CD4-positive, alpha-beta T cell (primary cell): ENCODE measurements at regions of chr12 and their contacts with region 1.

Region 1: GRCh38 chr12:56636675-56637540 is 6.8 kb upstream of the BAZ2A start:
- DNase-seq: peak; percentile 87 to 98 (median 93)
- ATAC-seq: peak; percentile 72
- H3K4me3 ChIP-seq: peak overlapping the region; percentile 76
- H3K4me3 Mint-ChIP-seq: peak overlapping the region; percentile 94
- H3K27ac ChIP-seq: peak overlapping the region; percentile 56 to 84
- H3K27ac Mint-ChIP-seq: peak overlapping the region; percentile 98
- H3K4me1 ChIP-seq: peaks cover 56% of the 10 kb centered on the region
- H3K4me1 Mint-ChIP-seq: peaks cover 65% of the 10 kb centered on the region
- H3K27me3 ChIP-seq: no peaks in the 10 kb centered on the region
- H3K27me3 Mint-ChIP-seq: no peaks in the 10 kb centered on the region
- CTCF ChIP-seq: peak; percentile 72

Region 2: GRCh38 chr12:55926738-55927587 is 709.9 kb before region 1 on chr12:
- CTCF ChIA-PET with region 1: no interaction called
- POLR2A ChIA-PET with region 1: interaction called, 3 read pairs
- intact Hi-C with region 1: loop called in 1 of 2 experiments (anchors 2 kb)
- DNase-seq: peak; percentile 83 to 96 (median 88)
- ATAC-seq: peak; percentile 32
- H3K4me3 ChIP-seq: peak overlapping the region; percentile 98
- H3K4me3 Mint-ChIP-seq: peak overlapping the region; percentile 96
- H3K27ac ChIP-seq: peak overlapping the region; percentile 72 to 93
- H3K27ac Mint-ChIP-seq: peak overlapping the region; percentile 97
- H3K4me1 ChIP-seq: peaks cover 45% of the 10 kb centered on the region
- H3K4me1 Mint-ChIP-seq: peaks cover 56% of the 10 kb centered on the region
- H3K27me3 ChIP-seq: no peaks in the 10 kb centered on the region
- H3K27me3 Mint-ChIP-seq: no peaks in the 10 kb centered on the region
- CTCF ChIP-seq: peak; percentile 86

Region 3: GRCh38 chr12:56601503-56601902 is 35.4 kb before region 1 on chr12:
- CTCF ChIA-PET with region 1: interaction called, 14 read pairs
- POLR2A ChIA-PET with region 1: interaction called, 6 read pairs
- intact Hi-C with region 1: loop called in 1 of 2 experiments (anchors 2 kb)
- DNase-seq: peak; percentile 14 to 59 (median 34)
- ATAC-seq: peak; percentile 69
- H3K4me3 ChIP-seq: no peak overlapping the region
- H3K4me3 Mint-ChIP-seq: no peak overlapping the region
- H3K27ac ChIP-seq: no peak overlapping the region
- H3K27ac Mint-ChIP-seq: no peak overlapping the region
- H3K4me1 ChIP-seq: no peaks in the 10 kb centered on the region
- H3K4me1 Mint-ChIP-seq: no peaks in the 10 kb centered on the region
- H3K27me3 ChIP-seq: no peaks in the 10 kb centered on the region
- H3K27me3 Mint-ChIP-seq: no peaks in the 10 kb centered on the region
- CTCF ChIP-seq: no peak

Region 4: DNA sequence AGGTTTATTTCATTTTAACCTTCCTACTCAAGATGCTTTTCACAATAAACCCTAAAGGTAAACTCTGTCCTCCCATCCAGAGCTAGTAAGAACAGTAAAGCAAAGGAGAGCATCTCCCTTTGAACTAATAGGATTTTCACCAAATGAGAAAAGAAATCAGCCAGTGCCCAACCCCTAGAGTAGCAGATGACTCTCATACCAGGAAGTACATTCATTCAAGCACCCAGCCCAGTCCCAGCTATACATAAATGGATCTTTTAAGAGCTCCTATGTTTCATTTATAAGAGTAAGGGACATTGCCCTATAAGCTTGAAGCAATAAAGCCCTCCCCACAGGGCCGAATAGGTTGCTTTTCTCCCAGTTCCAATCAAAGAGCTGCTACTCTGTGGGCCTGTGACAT is 14.4 kb before region 1 on chr12:
- CTCF ChIA-PET with region 1: interaction called, 30 read pairs
- POLR2A ChIA-PET with region 1: interaction called, 69 read pairs
- intact Hi-C with region 1: no loop called
- DNase-seq: no peak
- ATAC-seq: no peak
- H3K4me3 ChIP-seq: no peak overlapping the region
- H3K4me3 Mint-ChIP-seq: no peak overlapping the region
- H3K27ac ChIP-seq: no peak overlapping the region
- H3K27ac Mint-ChIP-seq: peak overlapping the region; percentile 18
- H3K4me1 ChIP-seq: peaks cover 37% of the 10 kb centered on the region
- H3K4me1 Mint-ChIP-seq: peaks cover 59% of the 10 kb centered on the region
- H3K27me3 ChIP-seq: no peaks in the 10 kb centered on the region
- H3K27me3 Mint-ChIP-seq: no peaks in the 10 kb centered on the region
- CTCF ChIP-seq: no peak

Region 5: GRCh38 chr12:56724972-56725722 is 88.2 kb after region 1 on chr12 and contains the start of gene NACA:
- CTCF ChIA-PET with region 1: interaction called, 9 read pairs
- POLR2A ChIA-PET with region 1: interaction called, 37 read pairs
- intact Hi-C with region 1: no loop called
- DNase-seq: peak; percentile 94 to 99 (median 96)
- ATAC-seq: peak; percentile 93
- H3K4me3 ChIP-seq: peak within 1 kb of the TSS; percentile 97
- H3K4me3 Mint-ChIP-seq: peak within 1 kb of the TSS; percentile 98
- H3K27ac ChIP-seq: peak within 1 kb of the TSS; percentile 86 to 91
- H3K27ac Mint-ChIP-seq: peak within 1 kb of the TSS; percentile 92
- H3K4me1 ChIP-seq: peaks cover 49% of the 10 kb centered on the region
- H3K4me1 Mint-ChIP-seq: peaks cover 60% of the 10 kb centered on the region
- H3K27me3 ChIP-seq: no peaks in the 10 kb centered on the region
- H3K27me3 Mint-ChIP-seq: no peaks in the 10 kb centered on the region
- CTCF ChIP-seq: no peak
- total RNA-seq, gene NACA: 1,441 to 1,479 TPM